Activated CD4-positive, alpha-beta T cell treated with anti-CD3 and anti-CD28 coated beads, Interleukin-2, amount 10 ng/mL, durations not matched to agents 7 days and 5 days (primary cell): ENCODE measurements at regions of chr21 and their contacts with region 1.

Region 1: DNA sequence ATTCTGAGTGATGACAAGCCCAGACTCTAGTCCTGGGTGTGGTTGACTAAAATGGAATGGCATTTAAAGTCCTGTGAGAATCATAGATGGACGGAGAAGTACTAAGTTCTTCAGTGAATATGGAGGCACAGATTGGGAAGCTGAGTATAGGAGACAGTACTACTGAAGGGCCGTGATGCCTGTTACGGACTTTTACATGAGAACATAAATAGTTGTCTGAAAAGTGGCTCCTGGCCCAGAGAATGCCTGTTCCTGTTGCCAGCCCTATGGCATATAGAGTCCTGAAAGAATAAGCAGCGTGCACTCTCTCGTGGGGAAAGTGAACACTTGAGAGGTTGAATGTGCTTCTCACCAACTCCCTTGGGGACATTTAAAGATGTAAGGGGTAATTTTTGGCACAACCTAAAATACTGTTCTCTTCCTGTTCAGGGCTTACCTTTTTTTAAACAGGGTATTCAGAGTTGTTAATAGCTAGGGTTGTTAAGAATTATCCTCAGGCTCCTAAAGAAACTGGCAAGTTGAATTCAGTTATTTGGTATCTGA is 20.4 kb downstream of the CCT8 start:
- DNase-seq: no peak
- H3K4me3 Mint-ChIP-seq: no peak overlapping the region
- H3K27ac Mint-ChIP-seq: no peak overlapping the region
- H3K4me1 Mint-ChIP-seq: no peaks in the 10 kb centered on the region
- H3K27me3 Mint-ChIP-seq: no peaks in the 10 kb centered on the region

Region 2: GRCh38 chr21:29034678-29035077 is 18.4 kb before region 1 on chr21:
- CTCF ChIA-PET with region 1: interaction called, 4 read pairs
- POLR2A ChIA-PET with region 1: interaction called, 10 read pairs
- DNase-seq: no peak
- H3K4me3 Mint-ChIP-seq: no peak overlapping the region
- H3K27ac Mint-ChIP-seq: no peak overlapping the region
- H3K4me1 Mint-ChIP-seq: peaks cover 10% of the 10 kb centered on the region
- H3K27me3 Mint-ChIP-seq: no peaks in the 10 kb centered on the region

Region 3: GRCh38 chr21:29073222-29074006 is 20.3 kb after region 1 on chr21 and contains the start of gene CCT8:
- CTCF ChIA-PET with region 1: interaction called, 3 read pairs
- POLR2A ChIA-PET with region 1: interaction called, 10 read pairs
- DNase-seq: peak; percentile 100
- H3K4me3 Mint-ChIP-seq: peak within 1 kb of the TSS; percentile 99
- H3K27ac Mint-ChIP-seq: peak within 1 kb of the TSS; percentile 99
- H3K4me1 Mint-ChIP-seq: peaks cover 50% of the 10 kb centered on the region
- H3K27me3 Mint-ChIP-seq: no peaks in the 10 kb centered on the region
- total RNA-seq, gene CCT8: 210 to 235 TPM